HepG2 (cell line): ENCODE measurements at regions of chr2 and their contacts with region 1.

Region 1: GRCh38 chr2:56077352-56077915 is 106.4 kb upstream of the CCDC85A start:
- DNase-seq: peak; percentile 49
- ATAC-seq: peak; percentile 65
- H3K4me3 ChIP-seq: no peak overlapping the region
- H3K27ac ChIP-seq: no peak overlapping the region
- H3K4me1 ChIP-seq: no peaks in the 10 kb centered on the region
- H3K27me3 ChIP-seq: no peaks in the 10 kb centered on the region
- CTCF ChIP-seq: peak; percentile 67
- EP300 ChIP-seq: no peak
- POLR2A ChIP-seq: no peak
- RAD21 ChIP-seq: 0 out of 2 replicates have a peak, but pooled peaks have one; percentile 19

Region 2: GRCh38 chr2:56132138-56132537 is 54.7 kb after region 1 on chr2:
- CTCF ChIA-PET with region 1: interaction called, 18 read pairs
- POLR2A ChIA-PET with region 1: no interaction called
- in situ Hi-C with region 1: loop called (anchors 5 kb)
- intact Hi-C with region 1: loop called (anchors 1 kb)
- DNase-seq: peak; percentile 60
- ATAC-seq: peak; percentile 58
- H3K4me3 ChIP-seq: no peak overlapping the region
- H3K27ac ChIP-seq: no peak overlapping the region
- H3K4me1 ChIP-seq: no peaks in the 10 kb centered on the region
- H3K27me3 ChIP-seq: 0 out of 5 replicates have a peak, but pooled peaks cover 0 to 4% of the 10 kb centered on the region in 2 experiments
- CTCF ChIP-seq: peak; percentile 64
- EP300 ChIP-seq: no peak
- POLR2A ChIP-seq: no peak
- RAD21 ChIP-seq: 0 out of 2 replicates have a peak, but pooled peaks have one; percentile 33